ENCODE measurements at regions of chrX and their contacts with region 1.

Region 1: DNA sequence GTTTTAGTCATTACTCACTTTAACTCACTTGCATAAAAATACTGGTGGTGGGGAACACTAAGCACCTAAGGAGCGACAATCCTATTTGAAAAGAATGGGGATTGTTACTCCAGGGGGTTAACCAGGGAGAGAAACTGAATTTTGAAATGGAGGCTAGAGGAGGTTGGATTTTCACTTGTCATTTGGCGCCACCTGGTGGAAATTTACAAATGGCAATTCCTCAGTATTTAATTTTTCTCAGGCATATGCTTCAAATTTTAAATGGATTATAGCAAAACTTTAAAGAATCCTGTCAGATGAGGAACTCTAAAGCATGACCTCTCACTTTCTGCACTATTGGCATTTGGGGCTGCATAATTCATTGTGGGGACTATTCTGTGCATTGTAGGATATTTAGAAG is 2.7 kb upstream of the GEMIN8 start:
- DNase-seq: peak; percentile 66
- ATAC-seq: no peak
- H3K4me3 Mint-ChIP-seq: no peak overlapping the region
- H3K27ac Mint-ChIP-seq: peak overlapping the region; percentile 49
- H3K4me1 Mint-ChIP-seq: peaks cover 32% of the 10 kb centered on the region
- H3K27me3 Mint-ChIP-seq: peaks cover 9% of the 10 kb centered on the region

Region 2: DNA sequence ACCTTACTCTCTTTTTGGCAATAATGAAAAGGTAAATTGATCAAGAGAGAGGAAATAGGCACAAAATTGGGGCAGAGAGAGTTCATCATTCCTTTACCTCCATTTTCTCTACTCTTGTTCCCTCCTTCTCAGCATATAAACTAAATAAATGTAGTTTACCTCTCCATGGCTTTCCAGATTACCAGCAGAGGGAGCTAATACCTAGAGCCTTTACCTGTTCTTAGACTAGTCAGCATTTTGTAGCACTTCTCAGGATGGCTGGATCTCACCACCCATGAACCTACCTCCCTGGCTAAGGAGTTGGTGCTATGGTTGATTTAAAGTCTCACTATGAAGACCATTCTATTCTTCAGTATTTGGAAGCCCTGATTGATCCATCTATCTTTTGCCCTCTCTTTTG is 282.2 kb before region 1 on chrX:
- CTCF ChIA-PET with region 1: interaction called, 25 read pairs
- POLR2A ChIA-PET with region 1: no interaction called
- DNase-seq: peak; percentile 24
- ATAC-seq: peak; percentile 65
- H3K4me3 Mint-ChIP-seq: no peak overlapping the region
- H3K27ac Mint-ChIP-seq: no peak overlapping the region
- H3K4me1 Mint-ChIP-seq: peaks cover 28% of the 10 kb centered on the region
- H3K27me3 Mint-ChIP-seq: no peaks in the 10 kb centered on the region

Measured in activated CD8-positive, alpha-beta T cell treated with anti-CD3 and anti-CD28 coated beads, Interleukin-2, amount 10 ng/mL, durations not matched to agents 7 days and 5 days (primary cell).